ENCODE measurements at regions of chr2 and their contacts with region 1.

Region 1: GRCh38 chr2:31233741-31234682 is at the start of gene EHD3:
- DNase-seq: peak; percentile 83
- H3K4me3 ChIP-seq: peak within 1 kb of the TSS; percentile 50 to 54
- H3K27ac ChIP-seq: peak within 1 kb of the TSS; percentile 48 to 66
- H3K4me1 ChIP-seq: peaks cover 2% of the 10 kb centered on the region
- H3K27me3 ChIP-seq: no peaks in the 10 kb centered on the region
- CTCF ChIP-seq: peak in 3 of 4 experiments; percentile 53 to 72 (median 62)
- POLR2A ChIP-seq: peak; percentile 38
- total RNA-seq, gene EHD3: 7.2 to 7.9 TPM

Region 2: GRCh38 chr2:31083234-31083993 is 150.6 kb before region 1 on chr2:
- intact Hi-C with region 1: no loop called
- DNase-seq: no peak
- H3K4me3 ChIP-seq: no peak overlapping the region
- H3K27ac ChIP-seq: no peak overlapping the region
- H3K4me1 ChIP-seq: no peaks in the 10 kb centered on the region
- H3K27me3 ChIP-seq: no peaks in the 10 kb centered on the region
- CTCF ChIP-seq: no peak
- POLR2A ChIP-seq: no peak

Region 3: DNA sequence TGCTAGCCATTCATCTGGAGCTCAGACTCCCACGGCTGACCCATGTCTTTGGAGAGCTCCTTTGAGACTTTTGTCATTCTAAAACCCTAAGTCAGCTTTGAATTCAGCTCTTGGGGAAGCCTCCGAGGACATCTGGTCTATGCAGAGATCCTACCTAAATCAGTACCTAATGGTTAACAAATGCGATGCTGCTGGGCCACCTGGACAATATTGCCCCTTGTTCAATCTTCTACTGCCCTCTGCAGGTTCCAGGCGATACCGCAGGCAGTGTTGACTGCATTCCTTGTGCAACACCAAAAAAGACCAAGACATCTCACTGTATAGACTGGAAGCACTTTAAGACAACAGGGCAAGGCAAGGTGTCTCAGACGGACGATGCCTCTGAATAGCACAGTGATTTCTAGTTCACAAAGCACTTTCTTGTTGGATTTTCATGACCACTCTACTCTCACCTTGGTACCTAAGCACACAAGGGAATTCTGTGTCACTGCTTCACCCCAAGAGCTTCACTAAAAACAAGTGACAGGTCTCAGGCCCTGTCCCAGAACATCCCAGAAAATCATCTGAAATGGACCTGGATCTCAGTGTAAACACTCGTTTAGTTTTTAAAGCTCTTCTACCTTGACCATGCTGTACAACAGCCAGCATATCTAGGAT is 99.6 kb after region 1 on chr2:
- intact Hi-C with region 1: loop called (anchors 5 kb)
- DNase-seq: peak; percentile 89
- H3K4me3 ChIP-seq: no peak overlapping the region
- H3K27ac ChIP-seq: peak overlapping the region in 1 of 2 donors; percentile 7
- H3K4me1 ChIP-seq: no peaks in the 10 kb centered on the region
- H3K27me3 ChIP-seq: peaks cover 2% of the 10 kb centered on the region
- CTCF ChIP-seq: peak; percentile 64 to 95 (median 89)
- POLR2A ChIP-seq: no peak

Region 4: DNA sequence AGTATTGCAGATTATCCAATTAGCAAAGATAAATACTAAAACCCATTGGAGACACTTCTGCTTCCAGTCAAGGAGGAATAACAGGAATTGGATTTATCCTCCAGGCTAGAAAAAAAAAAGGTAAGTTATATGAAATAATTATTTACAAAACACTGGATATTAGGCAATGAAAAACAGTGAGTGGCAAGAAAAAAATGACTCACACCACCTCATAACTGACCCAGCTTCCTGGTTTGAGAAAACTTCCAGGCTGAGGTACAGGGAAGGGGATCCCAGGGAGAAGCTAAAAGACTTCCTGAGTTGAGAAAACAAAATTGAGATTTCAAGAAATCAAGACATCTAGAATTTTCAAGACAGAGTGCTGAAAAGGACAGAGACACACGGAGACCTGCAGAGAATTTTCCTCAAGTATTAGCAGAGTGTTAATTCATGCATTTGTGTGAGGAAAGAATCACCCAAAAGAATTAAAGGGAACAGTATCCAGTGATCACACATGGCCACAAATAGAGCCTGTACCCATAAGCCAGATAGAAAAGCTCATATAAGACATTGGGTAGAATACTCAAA is 329.3 kb after region 1 on chr2:
- intact Hi-C with region 1: no loop called
- DNase-seq: no peak
- H3K4me3 ChIP-seq: no peak overlapping the region
- H3K27ac ChIP-seq: no peak overlapping the region
- H3K4me1 ChIP-seq: no peaks in the 10 kb centered on the region
- H3K27me3 ChIP-seq: no peaks in the 10 kb centered on the region
- CTCF ChIP-seq: no peak
- POLR2A ChIP-seq: no peak